Gastrocnemius medialis (tissue), 4 donors: ENCODE measurements at regions of chr3 and their contacts with region 1.

Region 1: GRCh38 chr3:160565442-160566403 is at the start of gene KPNA4:
- DNase-seq: peak; percentile 98
- ATAC-seq: peak; percentile 89 to 92
- H3K4me3 ChIP-seq: peak within 1 kb of the TSS; percentile 84 to 99 (median 94)
- H3K27ac ChIP-seq: peak within 1 kb of the TSS; percentile 97 to 100 (median 98)
- H3K4me1 ChIP-seq: peaks cover 52 to 56% of the 10 kb centered on the region in 2 donors
- H3K27me3 ChIP-seq: no peaks in the 10 kb centered on the region
- CTCF ChIP-seq: no peak
- POLR2A ChIP-seq: peak; percentile 81 to 92
- total RNA-seq, gene KPNA4: 78.9 to 126 (median 86.0) TPM

Region 2: DNA sequence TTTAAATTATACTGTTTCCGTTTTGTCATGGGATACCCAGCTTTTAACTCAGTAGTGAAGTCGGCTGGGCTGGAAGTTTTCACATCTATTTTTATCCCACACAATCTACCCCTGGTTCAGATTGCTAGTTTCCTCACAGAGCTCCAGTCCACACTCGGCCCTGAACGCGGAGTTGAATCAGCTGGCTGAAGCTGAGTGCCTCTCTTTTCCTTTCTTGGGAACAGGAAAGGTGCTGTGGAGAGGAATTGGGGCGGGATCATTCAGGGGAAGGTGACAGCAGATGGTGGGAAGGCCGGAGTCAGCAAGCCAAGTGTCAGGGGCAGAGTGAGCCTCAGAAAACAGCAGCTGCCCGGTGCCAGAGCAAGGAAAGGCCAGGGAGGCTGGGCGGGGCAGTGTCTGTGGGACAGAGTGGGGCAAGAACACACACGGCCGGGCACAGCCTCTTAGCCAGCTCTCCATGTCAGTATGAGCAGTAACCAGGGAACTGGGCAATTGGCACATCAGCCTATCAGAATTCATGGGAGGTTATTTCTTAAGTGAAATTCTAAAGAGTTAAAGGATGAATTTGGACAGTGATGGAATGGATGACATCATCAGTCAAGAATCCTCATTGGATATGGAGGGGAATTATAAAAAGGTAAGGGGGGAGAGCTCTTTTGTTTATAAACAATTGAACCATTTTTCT is 712.8 kb before region 1 on chr3:
- in situ Hi-C with region 1: no loop called
- intact Hi-C with region 1: loop called (anchors 10 kb)
- DNase-seq: peak; percentile 87 to 92
- ATAC-seq: peak; percentile 66 to 73
- H3K4me3 ChIP-seq: peak overlapping the region; percentile 51 to 69 (median 60)
- H3K27ac ChIP-seq: peak overlapping the region; percentile 86 to 97 (median 92)
- H3K4me1 ChIP-seq: peaks cover 64 to 72% of the 10 kb centered on the region in 2 donors
- H3K27me3 ChIP-seq: no peaks in the 10 kb centered on the region
- CTCF ChIP-seq: no peak
- POLR2A ChIP-seq: peak; percentile 74 to 83

Region 3: DNA sequence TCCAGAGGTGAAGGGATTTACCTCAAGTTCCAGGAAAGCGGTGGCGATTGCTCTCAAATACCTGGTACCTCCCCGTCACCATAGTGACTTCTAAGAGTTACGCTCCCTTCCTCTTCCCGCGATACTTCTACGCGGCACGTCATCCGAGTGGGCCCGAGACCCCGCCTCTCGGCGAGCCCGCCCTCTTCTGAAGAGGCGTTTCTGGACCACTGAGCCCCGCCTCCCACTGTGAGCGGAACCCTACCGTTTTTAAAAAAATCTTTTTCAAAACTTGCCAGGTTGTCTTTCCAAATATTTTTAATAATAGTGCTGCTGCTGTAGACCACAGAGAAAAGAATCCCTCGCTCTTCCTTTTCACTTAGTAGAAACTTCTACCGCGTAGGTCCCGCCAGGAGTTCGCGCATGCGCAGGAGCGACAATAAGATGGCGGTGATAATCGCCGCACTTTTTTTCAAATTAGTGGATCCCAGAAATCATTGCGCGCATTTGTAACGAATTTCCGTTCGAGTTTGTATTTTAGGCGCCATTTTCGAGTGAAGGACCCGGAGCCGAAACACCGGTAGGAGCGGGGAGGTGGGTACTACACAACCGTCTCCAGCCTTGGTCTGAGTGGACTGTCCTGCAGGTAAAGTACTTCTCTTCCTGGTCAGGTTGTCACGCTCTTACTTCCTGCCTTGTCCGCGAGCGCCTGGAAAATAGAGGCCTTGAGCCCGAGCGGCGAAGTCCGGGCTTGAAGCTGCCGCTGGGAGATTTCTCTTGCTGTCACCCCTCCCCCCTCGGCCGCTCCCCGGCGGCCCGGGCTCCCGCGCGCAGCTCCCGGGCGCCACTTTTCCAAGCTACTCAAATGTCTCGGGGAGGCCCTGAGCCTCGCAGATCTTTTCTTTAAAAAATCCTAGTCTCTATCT is 166.3 kb before region 1 on chr3 and contains the starts of genes IFT80 and SMC4:
- in situ Hi-C with region 1: no loop called
- intact Hi-C with region 1: loop called (anchors 10 kb)
- DNase-seq: peak; percentile 91 to 94
- ATAC-seq: peak; percentile 98
- H3K4me3 ChIP-seq: peak within 1 kb of the TSS; percentile 51 to 88 (median 80)
- H3K27ac ChIP-seq: peak within 1 kb of the TSS; percentile 82 to 87 (median 86)
- H3K4me1 ChIP-seq: peaks cover 20 to 28% of the 10 kb centered on the region in 2 donors
- H3K27me3 ChIP-seq: no peaks in the 10 kb centered on the region
- CTCF ChIP-seq: no peak
- POLR2A ChIP-seq: peak; percentile 45 to 75
- total RNA-seq, gene IFT80: 3.9 to 7.9 (median 6.0) TPM
- total RNA-seq, gene SMC4: 7.2 to 24.3 (median 14.7) TPM

Region 4: DNA sequence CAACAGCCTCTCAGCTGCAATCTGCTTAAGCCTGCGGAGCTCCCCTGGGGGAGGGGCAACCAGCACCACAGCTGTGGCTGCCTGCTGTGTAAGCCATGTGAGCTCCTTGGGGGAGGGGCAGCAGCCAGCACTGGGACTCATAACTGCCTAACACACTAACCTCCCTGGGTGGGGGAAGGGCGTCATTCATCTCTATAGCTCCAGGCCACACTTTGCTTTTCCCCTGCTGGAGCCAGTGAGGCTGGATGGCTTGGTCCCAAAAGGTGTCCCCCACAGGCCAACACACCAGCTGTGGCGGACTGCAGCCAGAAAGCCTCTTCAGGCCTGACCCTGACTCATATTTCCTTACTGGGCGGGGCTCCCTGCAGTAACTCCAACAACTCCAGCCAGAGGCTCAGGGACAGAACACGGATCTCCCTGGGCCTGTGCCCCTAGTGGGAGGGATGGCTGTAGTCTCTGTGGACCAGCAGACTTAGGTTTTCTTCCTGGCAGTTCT is 320.1 kb after region 1 on chr3:
- in situ Hi-C with region 1: no loop called
- intact Hi-C with region 1: loop called (anchors 10 kb)
- DNase-seq: peak; percentile 97 to 100
- ATAC-seq: peak; percentile 94 to 96
- H3K4me3 ChIP-seq: peak overlapping the region in 2 of 4 donors; percentile 3 to 42
- H3K27ac ChIP-seq: peak overlapping the region; percentile 82 to 91 (median 84)
- H3K4me1 ChIP-seq: peaks cover 47 to 51% of the 10 kb centered on the region in 2 donors
- H3K27me3 ChIP-seq: no peaks in the 10 kb centered on the region
- CTCF ChIP-seq: peak; percentile 23 to 57 (median 41)
- POLR2A ChIP-seq: no peak

Region 5: DNA sequence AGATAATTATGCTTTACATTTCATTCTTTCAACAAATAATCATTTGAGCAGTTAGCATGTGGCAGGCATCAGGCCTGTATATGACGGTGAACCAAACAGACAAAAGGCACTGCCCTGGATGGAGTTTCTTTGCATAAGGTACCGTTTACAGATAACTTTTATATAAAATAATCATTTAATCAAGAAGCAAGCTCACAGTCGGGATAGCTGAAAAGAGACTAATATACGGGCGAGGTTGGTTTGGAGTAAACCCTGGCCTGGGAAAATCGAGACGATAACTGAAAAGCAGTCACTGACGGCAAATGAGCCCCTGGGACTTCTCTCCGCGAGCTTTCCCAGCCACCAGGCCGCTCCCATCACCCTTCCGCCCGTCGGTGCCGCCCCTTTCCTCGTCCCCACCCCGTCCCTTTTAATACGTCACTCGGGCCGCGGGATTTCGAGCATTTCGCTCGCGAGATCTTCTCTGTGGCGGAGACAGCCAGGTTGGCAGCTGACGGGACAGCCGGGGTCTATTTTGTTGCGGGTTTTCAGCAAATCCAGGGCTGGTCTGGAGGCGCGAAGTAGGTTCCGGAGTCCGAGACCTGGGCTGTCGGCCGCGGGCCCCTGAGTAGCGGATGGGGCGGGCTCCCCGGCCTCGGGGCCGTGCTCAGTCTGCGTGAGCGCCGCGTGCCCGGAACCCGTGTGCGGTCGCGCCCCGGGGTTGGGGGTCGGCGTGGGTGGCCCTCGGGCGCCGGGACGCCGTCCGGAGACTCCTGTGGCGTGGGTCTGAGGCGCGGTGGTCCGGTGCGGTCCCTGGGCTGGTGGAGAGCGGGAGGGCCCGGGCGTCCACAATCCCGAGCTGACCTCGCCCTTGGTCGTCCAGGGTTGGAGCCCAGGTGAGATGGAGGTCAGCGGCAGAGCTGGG is 655.4 kb after region 1 on chr3 and contains the start of gene NMD3:
- in situ Hi-C with region 1: no loop called
- intact Hi-C with region 1: loop called (anchors 5 kb)
- DNase-seq: peak; percentile 90 to 91
- ATAC-seq: peak; percentile 98 to 99
- H3K4me3 ChIP-seq: peak within 1 kb of the TSS; percentile 84 to 95 (median 90)
- H3K27ac ChIP-seq: peak within 1 kb of the TSS; percentile 92 to 95 (median 94)
- H3K4me1 ChIP-seq: peaks cover 19 to 29% of the 10 kb centered on the region in 2 donors
- H3K27me3 ChIP-seq: no peaks in the 10 kb centered on the region
- CTCF ChIP-seq: no peak
- POLR2A ChIP-seq: peak; percentile 83 to 87
- total RNA-seq, gene NMD3: 27.3 to 42.8 (median 37.4) TPM